ENCODE measurements at regions of chr7 and their contacts with region 1.

Region 1: GRCh38 chr7:76282344-76283253 is 19.9 kb upstream of the HSPB1 start:
- DNase-seq: no peak
- ATAC-seq: peak in 1 of 2 donors; percentile 19
- H3K4me3 ChIP-seq: peak overlapping the region; percentile 36 to 55 (median 48)
- H3K27ac ChIP-seq: no peak overlapping the region
- H3K4me1 ChIP-seq: peaks cover 4 to 5% of the 10 kb centered on the region in 2 donors
- H3K27me3 ChIP-seq: peaks cover 21 to 30% (median 22%) of the 10 kb centered on the region in 3 donors
- CTCF ChIP-seq: no peak
- POLR2A ChIP-seq: peak in 1 of 2 donors; percentile 16

Region 2: GRCh38 chr7:75847707-75848106 is 434.9 kb before region 1 on chr7:
- in situ Hi-C with region 1: no loop called
- intact Hi-C with region 1: no loop called
- DNase-seq: peak in 1 of 2 donors; percentile 14
- ATAC-seq: no peak
- H3K4me3 ChIP-seq: no peak overlapping the region
- H3K27ac ChIP-seq: no peak overlapping the region
- H3K4me1 ChIP-seq: no peaks in the 10 kb centered on the region
- H3K27me3 ChIP-seq: no peaks in the 10 kb centered on the region
- CTCF ChIP-seq: no peak
- POLR2A ChIP-seq: no peak

Region 3: DNA sequence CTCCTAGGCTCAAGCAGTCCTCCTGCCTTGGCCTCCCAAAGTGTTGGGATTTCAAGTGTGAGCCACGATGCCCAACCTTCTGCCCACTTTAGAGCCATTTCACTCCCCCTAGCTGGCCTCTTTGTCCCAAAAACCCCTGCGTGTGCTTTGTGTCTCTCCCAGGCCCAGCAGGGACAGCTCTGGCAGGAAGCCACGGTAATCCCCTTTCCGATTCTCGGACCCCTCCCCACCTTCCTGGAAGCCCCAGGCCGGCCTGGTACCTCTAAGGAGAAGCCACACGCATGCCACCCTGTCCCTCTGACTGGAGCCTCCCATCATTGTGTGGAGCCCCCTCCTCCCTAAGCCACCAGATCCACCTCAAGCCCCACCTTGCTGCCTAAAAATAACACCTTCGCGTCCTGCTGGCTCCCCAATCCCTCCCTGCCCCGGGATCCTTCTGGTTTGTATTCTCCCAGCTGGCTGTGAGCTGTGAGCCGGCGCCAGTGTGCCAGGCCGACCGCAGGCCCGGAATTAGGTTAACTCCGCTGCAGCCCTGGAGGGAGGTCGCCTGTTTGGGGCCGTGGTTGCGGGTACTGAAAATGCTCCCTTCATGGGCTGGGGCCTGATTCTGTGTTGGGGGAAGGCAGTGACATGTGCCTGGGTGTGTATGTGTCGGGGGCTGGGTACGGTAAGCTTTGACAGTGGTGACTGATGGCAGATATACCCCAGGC is 97.3 kb before region 1 on chr7:
- in situ Hi-C with region 1: loop called in 2 of 4 experiments (anchors 10 kb)
- intact Hi-C with region 1: no loop called
- DNase-seq: no peak
- ATAC-seq: no peak
- H3K4me3 ChIP-seq: no peak overlapping the region
- H3K27ac ChIP-seq: no peak overlapping the region
- H3K4me1 ChIP-seq: no peaks in the 10 kb centered on the region
- H3K27me3 ChIP-seq: no peaks in the 10 kb centered on the region
- CTCF ChIP-seq: no peak
- POLR2A ChIP-seq: no peak

Region 4: GRCh38 chr7:76233538-76234281 is 48.9 kb before region 1 on chr7:
- in situ Hi-C with region 1: no loop called
- intact Hi-C with region 1: no loop called
- DNase-seq: no peak
- ATAC-seq: no peak
- H3K4me3 ChIP-seq: no peak overlapping the region
- H3K27ac ChIP-seq: no peak overlapping the region
- H3K4me1 ChIP-seq: peaks cover 0 to 5% of the 10 kb centered on the region in 2 donors
- H3K27me3 ChIP-seq: peaks cover 34 to 50% (median 46%) of the 10 kb centered on the region in 3 donors
- CTCF ChIP-seq: no peak
- POLR2A ChIP-seq: no peak

Region 5: GRCh38 chr7:76244781-76245391 is 37.7 kb before region 1 on chr7:
- in situ Hi-C with region 1: no loop called
- intact Hi-C with region 1: no loop called
- DNase-seq: no peak
- ATAC-seq: no peak
- H3K4me3 ChIP-seq: no peak overlapping the region
- H3K27ac ChIP-seq: no peak overlapping the region
- H3K4me1 ChIP-seq: no peaks in the 10 kb centered on the region
- H3K27me3 ChIP-seq: no peaks in the 10 kb centered on the region
- CTCF ChIP-seq: no peak
- POLR2A ChIP-seq: no peak

Measured in gastrocnemius medialis (tissue), 4 donors.